Aorta (tissue), 5 donors: ENCODE measurements at regions of chr22 and their contacts with region 1.

Region 1: GRCh38 chr22:37933711-37934376 is 19.6 kb downstream of the C22orf23 start:
- DNase-seq: peak; percentile 92 to 98
- ATAC-seq: peak; percentile 96
- H3K4me3 ChIP-seq: no peak overlapping the region
- H3K27ac ChIP-seq: peak overlapping the region in 1 of 2 donors; percentile 60
- H3K4me1 ChIP-seq: no peaks in the 10 kb centered on the region
- H3K27me3 ChIP-seq: no peaks in the 10 kb centered on the region

Region 2: GRCh38 chr22:37817705-37818408 is 116.0 kb before region 1 on chr22:
- intact Hi-C with region 1: loop called (anchors 10 kb)
- DNase-seq: peak; percentile 86 to 95
- ATAC-seq: peak; percentile 93
- H3K4me3 ChIP-seq: no peak overlapping the region
- H3K27ac ChIP-seq: no peak overlapping the region
- H3K4me1 ChIP-seq: no peaks in the 10 kb centered on the region
- H3K27me3 ChIP-seq: no peaks in the 10 kb centered on the region

Region 3: GRCh38 chr22:37824674-37825641 is 108.9 kb before region 1 on chr22:
- intact Hi-C with region 1: loop called in 1 of 2 experiments (anchors 10 kb)
- DNase-seq: no peak
- ATAC-seq: no peak
- H3K4me3 ChIP-seq: peak overlapping the region; percentile 11 to 24
- H3K27ac ChIP-seq: no peak overlapping the region
- H3K4me1 ChIP-seq: no peaks in the 10 kb centered on the region
- H3K27me3 ChIP-seq: no peaks in the 10 kb centered on the region

Region 4: DNA sequence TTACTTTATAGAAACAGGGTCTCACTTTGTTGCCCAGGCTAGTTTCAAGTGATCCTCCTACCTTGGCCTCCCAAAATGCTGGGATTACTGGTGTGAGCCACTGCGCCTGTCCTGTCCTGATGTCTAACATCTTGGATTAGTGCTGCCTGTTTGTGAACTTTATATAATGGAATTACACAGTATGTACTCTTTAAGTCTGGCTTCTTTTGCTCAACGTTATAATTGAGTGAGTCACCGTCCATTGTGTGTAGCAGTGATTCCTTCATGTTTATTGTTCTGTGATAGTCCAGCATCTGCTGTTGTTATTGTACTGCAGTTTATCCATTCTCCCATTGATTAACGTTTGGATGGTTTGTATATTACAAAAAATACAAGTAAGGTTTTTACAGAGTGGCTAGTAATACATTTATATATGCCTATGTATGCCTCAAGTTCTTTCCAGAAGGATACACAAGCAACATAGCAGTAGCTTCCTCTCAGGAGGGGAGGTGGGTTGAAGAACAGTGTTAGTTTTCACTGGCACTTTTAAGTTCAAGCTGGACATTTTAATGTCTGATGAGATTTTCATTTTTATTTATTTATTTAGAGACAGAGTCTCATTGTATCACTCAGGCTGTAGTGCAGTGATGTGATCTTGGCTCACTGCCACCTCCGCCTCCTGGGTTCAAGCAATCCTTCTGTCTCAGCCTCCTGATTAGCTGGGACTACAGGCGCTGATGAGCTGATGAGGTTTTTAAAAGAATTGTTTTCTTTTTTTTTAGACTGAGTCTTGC is 53.0 kb before region 1 on chr22:
- intact Hi-C with region 1: loop called in 1 of 2 experiments (anchors 5 kb)
- DNase-seq: no peak
- ATAC-seq: no peak
- H3K4me3 ChIP-seq: no peak overlapping the region
- H3K27ac ChIP-seq: no peak overlapping the region
- H3K4me1 ChIP-seq: peaks cover 0 to 2% of the 10 kb centered on the region in 2 donors
- H3K27me3 ChIP-seq: no peaks in the 10 kb centered on the region

Region 5: DNA sequence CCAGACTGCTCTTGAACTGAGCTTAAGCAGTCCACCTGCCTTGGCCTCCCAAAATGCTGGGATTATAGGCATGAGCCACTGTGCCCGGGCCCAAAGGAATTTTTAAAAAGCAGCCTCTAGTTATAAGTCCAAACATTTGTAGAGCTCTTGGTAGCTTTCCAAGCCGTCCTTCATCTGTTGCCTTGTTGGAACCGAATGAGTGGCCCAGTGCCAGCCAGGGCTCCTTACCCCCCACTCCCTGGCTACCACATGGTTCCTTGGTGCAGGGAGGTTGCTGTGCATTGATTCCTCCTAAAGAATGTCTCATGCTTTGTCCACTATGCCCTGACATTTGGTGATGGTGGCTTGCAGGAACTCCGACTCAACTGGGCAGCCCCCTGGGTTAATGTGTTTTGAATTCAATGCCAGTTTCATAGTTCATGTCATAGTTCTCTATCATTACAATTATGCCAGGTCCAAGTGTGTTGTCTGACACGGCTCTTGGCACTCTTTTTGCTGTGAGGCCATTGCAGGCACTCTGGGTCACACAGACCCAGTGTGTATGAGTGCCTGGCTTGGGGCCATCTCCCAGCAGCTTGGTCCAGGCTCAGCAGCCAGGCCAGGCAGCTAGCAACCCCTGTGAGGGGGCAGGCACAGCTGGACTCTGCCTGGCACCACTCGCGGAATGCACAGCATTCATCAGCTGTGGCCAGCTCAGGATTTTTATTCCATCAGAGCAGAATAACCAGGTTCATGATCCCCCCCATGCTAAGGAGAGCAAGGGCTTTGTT is 41.1 kb before region 1 on chr22:
- intact Hi-C with region 1: loop called in 1 of 2 experiments (anchors 5 kb)
- DNase-seq: peak; percentile 72 to 87
- ATAC-seq: peak; percentile 63
- H3K4me3 ChIP-seq: no peak overlapping the region
- H3K27ac ChIP-seq: peak overlapping the region; percentile 4 to 65
- H3K4me1 ChIP-seq: no peaks in the 10 kb centered on the region
- H3K27me3 ChIP-seq: no peaks in the 10 kb centered on the region